Breast epithelium (tissue), 4 donors: ENCODE measurements at regions of chr22 and their contacts with region 1.

Region 1: DNA sequence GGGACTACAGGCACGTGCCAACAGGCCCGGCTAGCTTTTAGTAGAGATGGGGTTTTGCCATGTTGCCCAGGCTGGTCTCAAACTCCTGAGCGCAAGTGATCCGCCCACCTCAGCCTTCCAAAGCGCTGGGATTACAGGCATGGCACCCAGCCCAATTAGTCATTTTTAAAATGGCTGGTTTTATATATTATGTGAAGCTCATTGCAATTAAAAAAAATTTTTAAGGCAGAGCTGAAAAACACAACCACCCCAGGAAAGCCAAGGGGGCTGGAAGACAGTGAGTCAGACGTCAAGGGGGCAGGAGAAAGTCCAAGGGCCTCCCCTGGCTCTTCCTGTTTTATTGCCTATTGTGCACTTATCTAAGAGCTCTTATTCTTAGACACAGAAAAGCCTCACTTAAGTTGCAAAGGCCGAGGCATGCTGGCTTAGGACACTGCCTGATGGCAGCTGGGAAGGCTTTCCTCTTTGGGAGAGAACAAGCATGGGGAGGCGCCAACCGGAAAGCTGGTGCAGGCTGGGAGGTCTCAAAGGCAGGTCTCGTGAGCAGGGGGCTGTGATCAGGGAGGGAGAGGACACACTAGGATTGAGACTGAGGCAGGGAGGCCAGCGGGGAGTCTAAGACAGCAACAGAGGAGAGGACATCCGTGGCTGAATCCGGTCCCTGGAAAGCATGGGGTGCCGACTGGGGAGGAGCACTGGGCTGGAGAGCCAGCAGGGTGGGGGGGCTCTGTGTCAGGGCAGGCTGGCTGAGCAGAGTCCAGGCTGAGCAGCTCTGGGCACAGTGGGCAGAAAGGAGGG is 11.1 kb upstream of the OSM start:
- DNase-seq: no peak
- H3K4me3 ChIP-seq: no peak overlapping the region
- H3K27ac ChIP-seq: peak overlapping the region; percentile 29 to 69
- H3K4me1 ChIP-seq: no peaks in the 10 kb centered on the region
- H3K27me3 ChIP-seq: no peaks in the 10 kb centered on the region
- CTCF ChIP-seq: no peak
- POLR2A ChIP-seq: no peak

Region 2: DNA sequence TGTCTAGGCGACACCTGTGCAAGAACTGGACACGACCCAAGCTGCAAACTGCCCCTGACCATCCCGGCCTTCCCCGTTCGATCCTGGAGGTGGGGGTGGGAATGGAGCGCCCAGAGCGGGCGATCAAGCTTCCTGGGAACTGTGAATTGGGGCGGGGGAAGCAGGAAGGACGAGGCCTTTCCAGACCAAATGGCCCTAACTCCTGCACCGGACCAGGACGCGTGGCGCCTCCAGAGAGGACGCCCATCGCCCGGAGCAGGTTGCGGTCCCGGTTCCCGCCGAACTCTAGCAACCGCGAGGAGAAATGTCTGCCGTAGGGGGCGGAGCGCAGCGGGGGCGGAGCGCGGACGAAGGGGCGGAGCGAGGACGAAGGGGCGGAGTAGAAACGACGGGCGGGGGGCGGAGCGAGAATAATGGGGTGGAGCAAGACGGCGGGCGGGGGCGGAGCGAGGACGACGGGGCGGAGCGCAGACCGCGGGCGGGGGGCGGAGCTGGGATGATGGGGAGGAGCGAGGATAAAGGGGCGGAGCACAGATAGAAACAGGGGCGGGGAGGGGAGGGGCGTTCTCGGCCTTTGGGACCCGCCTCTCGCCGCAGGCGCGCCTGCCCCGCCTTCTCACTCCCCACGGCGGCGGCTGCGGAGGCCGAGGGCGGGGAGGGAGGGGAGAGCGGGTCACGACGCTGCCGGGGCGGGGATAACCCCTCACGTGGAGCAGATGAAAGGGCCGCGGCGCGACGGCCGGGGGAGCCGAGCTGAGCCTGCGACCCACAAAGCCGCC is 1394.7 kb before region 1 on chr22 and contains the start of gene ZNRF3:
- intact Hi-C with region 1: loop called (anchors 5 kb)
- DNase-seq: peak; percentile 83 to 95
- H3K4me3 ChIP-seq: peak within 1 kb of the TSS; percentile 57 to 73 (median 66)
- H3K27ac ChIP-seq: peak within 1 kb of the TSS; percentile 70 to 77
- H3K4me1 ChIP-seq: peaks cover 3 to 4% of the 10 kb centered on the region in 2 donors
- H3K27me3 ChIP-seq: no peaks in the 10 kb centered on the region
- CTCF ChIP-seq: no peak
- POLR2A ChIP-seq: no peak
- total RNA-seq, gene ZNRF3: 6.9 to 7.9 (median 6.9) TPM

Region 3: DNA sequence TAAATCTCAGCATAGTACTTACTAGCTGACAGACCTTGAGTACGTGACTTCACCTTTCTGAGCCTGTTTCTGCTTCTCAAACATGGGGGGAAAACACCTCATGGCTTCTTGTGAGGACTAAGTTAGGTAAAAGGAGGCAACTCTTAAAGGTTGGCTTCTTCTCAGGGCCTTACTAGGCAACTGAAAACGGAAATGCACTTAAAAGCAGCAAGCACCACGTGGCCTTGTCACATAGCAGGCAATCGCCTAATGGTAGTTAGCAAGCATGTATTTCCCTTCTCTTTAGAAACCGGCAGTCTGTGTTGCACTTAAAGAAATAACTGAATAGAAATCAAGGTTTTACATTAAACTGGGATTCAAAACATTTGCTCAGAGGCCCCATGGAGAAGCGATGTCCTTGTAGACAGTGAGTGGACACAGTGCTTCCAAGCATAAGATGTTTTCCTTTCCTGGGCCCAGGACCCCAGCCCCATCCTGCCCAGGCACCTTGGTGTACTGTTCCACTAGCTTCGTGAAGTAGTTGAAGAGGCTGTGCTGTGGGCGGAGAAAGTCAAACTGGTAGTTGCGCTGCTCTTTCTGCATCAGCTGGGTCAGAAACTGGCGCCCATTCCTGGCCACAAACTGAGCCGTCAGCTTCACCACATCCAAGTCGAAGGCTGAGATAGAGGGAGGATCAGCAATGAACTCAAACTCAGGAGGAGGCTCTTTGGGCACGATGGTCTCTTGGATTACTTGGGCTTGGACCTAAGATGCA is 66.9 kb after region 1 on chr22:
- intact Hi-C with region 1: loop called (anchors 2 kb)
- DNase-seq: no peak
- H3K4me3 ChIP-seq: no peak overlapping the region
- H3K27ac ChIP-seq: no peak overlapping the region
- H3K4me1 ChIP-seq: peaks cover 4% of the 10 kb centered on the region in 2 donors
- H3K27me3 ChIP-seq: no peaks in the 10 kb centered on the region
- CTCF ChIP-seq: no peak
- POLR2A ChIP-seq: no peak

Region 4: DNA sequence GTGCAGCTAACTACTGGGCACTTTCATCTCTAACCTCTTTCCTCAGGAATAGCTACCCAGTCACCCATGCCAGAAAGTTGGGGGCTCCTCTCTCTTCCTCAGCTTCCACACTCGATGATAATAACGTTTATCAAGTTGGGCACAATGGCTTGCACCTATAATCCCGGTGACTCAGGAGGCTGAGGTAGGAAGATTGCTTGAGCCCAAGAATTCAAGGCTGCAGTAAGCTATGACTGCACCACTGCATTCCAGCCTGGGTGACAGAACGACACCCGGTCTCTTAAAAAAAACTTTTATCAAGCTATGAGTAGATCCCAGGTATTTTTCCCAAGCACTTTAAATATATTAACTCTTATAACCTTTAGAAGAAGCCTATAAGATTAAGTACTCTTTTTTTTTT is 76.9 kb after region 1 on chr22:
- intact Hi-C with region 1: no loop called
- DNase-seq: no peak
- H3K4me3 ChIP-seq: peak overlapping the region in 1 of 3 donors; percentile 91
- H3K27ac ChIP-seq: peak overlapping the region in 1 of 2 donors; percentile 56
- H3K4me1 ChIP-seq: peaks cover 0 to 11% of the 10 kb centered on the region in 2 donors
- H3K27me3 ChIP-seq: no peaks in the 10 kb centered on the region
- CTCF ChIP-seq: no peak
- POLR2A ChIP-seq: no peak

Region 5: DNA sequence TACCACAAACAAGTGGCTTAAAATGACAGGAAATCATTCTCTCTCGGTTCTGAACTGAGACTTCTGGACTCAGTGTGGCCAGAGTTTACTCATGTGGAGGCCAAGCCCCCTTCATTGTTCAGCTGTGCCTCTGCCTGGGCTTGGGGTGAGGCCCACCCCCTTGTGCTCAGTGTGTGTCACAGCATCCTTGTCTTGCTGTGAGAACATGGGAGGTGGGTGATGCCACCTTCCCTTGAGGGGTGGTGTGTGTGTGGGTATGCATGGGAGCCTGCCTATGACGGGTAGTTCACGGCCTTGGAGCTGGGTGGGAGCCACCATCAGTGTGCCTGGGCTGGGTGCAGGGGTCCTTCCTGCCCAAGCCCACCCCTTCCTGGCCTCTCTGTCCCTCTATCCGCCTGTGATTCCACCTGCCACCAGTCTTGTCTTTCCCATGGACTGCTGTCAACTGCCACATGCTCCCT is 589.1 kb after region 1 on chr22:
- intact Hi-C with region 1: loop called (anchors 5 kb)
- DNase-seq: peak in 1 of 2 donors; percentile 27
- H3K4me3 ChIP-seq: no peak overlapping the region
- H3K27ac ChIP-seq: no peak overlapping the region
- H3K4me1 ChIP-seq: no peaks in the 10 kb centered on the region
- H3K27me3 ChIP-seq: no peaks in the 10 kb centered on the region
- CTCF ChIP-seq: no peak
- POLR2A ChIP-seq: no peak